ENCODE measurements at regions of chr3 and their contacts with region 1.

Region 1: GRCh38 chr3:3179407-3180094 is at the start of gene CRBN:
- DNase-seq: peak; percentile 74 to 80
- ATAC-seq: peak; percentile 97 to 98
- H3K4me3 ChIP-seq: peak within 1 kb of the TSS; percentile 97 to 99 (median 98)
- H3K27ac ChIP-seq: peak within 1 kb of the TSS; percentile 85 to 96 (median 91)
- H3K4me1 ChIP-seq: peaks cover 28 to 35% of the 10 kb centered on the region in 2 donors
- H3K27me3 ChIP-seq: no peaks in the 10 kb centered on the region
- CTCF ChIP-seq: peak; percentile 97 to 99 (median 98)
- POLR2A ChIP-seq: peak; percentile 56 to 58
- total RNA-seq, gene CRBN: 49.2 to 101 (median 84.9) TPM

Region 2: GRCh38 chr3:3126477-3127431 is 52.8 kb before region 1 on chr3 and contains the start of gene TRNT1:
- in situ Hi-C with region 1: no loop called
- intact Hi-C with region 1: loop called (anchors 2 kb)
- DNase-seq: peak; percentile 89 to 92
- ATAC-seq: peak; percentile 97 to 98
- H3K4me3 ChIP-seq: peak within 1 kb of the TSS; percentile 75 to 97 (median 90)
- H3K27ac ChIP-seq: peak within 1 kb of the TSS; percentile 90 to 96 (median 94)
- H3K4me1 ChIP-seq: peaks cover 7 to 11% of the 10 kb centered on the region in 2 donors
- H3K27me3 ChIP-seq: no peaks in the 10 kb centered on the region
- CTCF ChIP-seq: no peak
- POLR2A ChIP-seq: peak; percentile 85 to 92
- total RNA-seq, gene TRNT1: 2.7 to 9.6 (median 7.3) TPM

Region 3: DNA sequence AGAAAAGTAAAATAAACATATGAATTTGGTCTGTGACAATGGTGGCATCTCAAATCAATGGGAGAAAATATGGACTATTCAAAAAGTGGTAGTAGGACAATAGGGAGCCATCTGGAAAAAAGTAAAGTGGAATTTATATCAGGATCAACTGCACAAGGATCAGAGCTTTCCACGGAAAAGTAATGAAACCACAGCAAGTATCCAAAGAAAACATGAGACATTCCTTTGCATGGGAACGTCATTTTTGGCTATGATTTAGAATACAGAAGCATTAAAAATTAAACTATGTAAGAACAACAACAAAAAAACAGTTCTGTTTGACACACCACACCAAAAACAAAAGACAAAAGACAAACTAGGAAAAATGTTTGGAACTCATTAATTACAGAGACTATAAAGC is 18.7 kb before region 1 on chr3:
- in situ Hi-C with region 1: no loop called
- intact Hi-C with region 1: no loop called
- DNase-seq: no peak
- ATAC-seq: no peak
- H3K4me3 ChIP-seq: no peak overlapping the region
- H3K27ac ChIP-seq: no peak overlapping the region
- H3K4me1 ChIP-seq: no peaks in the 10 kb centered on the region
- H3K27me3 ChIP-seq: no peaks in the 10 kb centered on the region
- CTCF ChIP-seq: no peak
- POLR2A ChIP-seq: no peak

Region 4: GRCh38 chr3:3392946-3393345 is 213.4 kb after region 1 on chr3:
- in situ Hi-C with region 1: no loop called
- intact Hi-C with region 1: no loop called
- DNase-seq: no peak
- ATAC-seq: no peak
- H3K4me3 ChIP-seq: no peak overlapping the region
- H3K27ac ChIP-seq: no peak overlapping the region
- H3K4me1 ChIP-seq: no peaks in the 10 kb centered on the region
- H3K27me3 ChIP-seq: no peaks in the 10 kb centered on the region
- CTCF ChIP-seq: no peak
- POLR2A ChIP-seq: no peak

Region 5: DNA sequence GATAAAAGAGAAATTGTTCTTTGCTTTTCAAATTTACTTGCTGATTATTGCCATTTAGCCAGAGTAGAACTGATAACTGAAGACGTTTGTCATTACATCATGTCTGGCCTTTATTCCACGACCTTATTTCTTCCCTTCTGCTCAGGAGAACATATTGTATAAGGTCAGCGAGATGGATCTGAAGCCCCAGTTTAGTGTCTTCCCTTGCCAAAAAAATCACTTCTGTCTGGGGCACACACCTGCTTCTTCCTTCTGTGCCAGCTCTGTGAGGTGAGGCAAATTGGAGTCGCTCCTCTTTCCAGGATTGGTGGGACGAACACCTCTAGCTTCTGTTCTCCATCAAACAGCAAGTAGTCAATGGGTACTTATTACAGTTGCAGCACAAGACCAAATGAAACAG is 250.3 kb after region 1 on chr3:
- in situ Hi-C with region 1: no loop called
- intact Hi-C with region 1: no loop called
- DNase-seq: no peak
- ATAC-seq: no peak
- H3K4me3 ChIP-seq: no peak overlapping the region
- H3K27ac ChIP-seq: no peak overlapping the region
- H3K4me1 ChIP-seq: no peaks in the 10 kb centered on the region
- H3K27me3 ChIP-seq: no peaks in the 10 kb centered on the region
- CTCF ChIP-seq: no peak
- POLR2A ChIP-seq: no peak

Region 6: GRCh38 chr3:4290272-4290893 is 1110.8 kb after region 1 on chr3:
- in situ Hi-C with region 1: loop called in 2 of 4 experiments (anchors 10 kb)
- intact Hi-C with region 1: no loop called
- DNase-seq: no peak
- ATAC-seq: peak in 1 of 2 donors; percentile 68
- H3K4me3 ChIP-seq: no peak overlapping the region
- H3K27ac ChIP-seq: no peak overlapping the region
- H3K4me1 ChIP-seq: no peaks in the 10 kb centered on the region
- H3K27me3 ChIP-seq: no peaks in the 10 kb centered on the region
- CTCF ChIP-seq: peak; percentile 64 to 88 (median 75)
- POLR2A ChIP-seq: no peak

Measured in gastrocnemius medialis (tissue), 4 donors.